Mammary epithelial cell (primary cell): ENCODE measurements at regions of chr2 and their contacts with region 1.

Region 1: GRCh38 chr2:201735486-201735885 is 37.0 kb upstream of the MPP4 start:
- DNase-seq: no peak
- H3K4me3 ChIP-seq: no peak overlapping the region
- H3K27ac ChIP-seq: no peak overlapping the region
- H3K4me1 ChIP-seq: peaks cover 10% of the 10 kb centered on the region
- H3K27me3 ChIP-seq: no peaks in the 10 kb centered on the region
- CTCF ChIP-seq: no peak

Region 2: DNA sequence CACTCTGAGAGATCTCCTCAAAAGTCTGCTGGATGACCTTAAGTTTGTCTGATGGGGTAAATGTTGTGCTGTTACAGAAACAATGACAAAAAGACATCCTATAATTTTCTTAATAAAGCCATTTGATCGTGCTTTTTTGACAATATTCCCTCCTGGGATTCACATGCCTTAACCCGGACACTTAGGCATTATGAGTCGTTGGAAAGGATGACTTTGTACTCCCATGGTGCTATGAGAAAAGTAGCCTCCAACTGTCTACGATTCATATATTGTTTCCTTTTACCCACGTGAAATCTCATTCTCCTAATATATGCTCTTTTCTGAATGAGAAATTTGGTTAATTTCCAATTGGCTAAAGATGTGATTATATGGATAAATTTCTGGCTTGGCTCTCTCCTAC is 30.9 kb before region 1 on chr2:
- CTCF ChIA-PET with region 1: no interaction called
- dilution Hi-C with region 1: loop called (anchors 5 kb)
- in situ Hi-C with region 1: no loop called
- intact Hi-C with region 1: no loop called
- DNase-seq: no peak
- H3K4me3 ChIP-seq: no peak overlapping the region
- H3K27ac ChIP-seq: no peak overlapping the region
- H3K4me1 ChIP-seq: peaks cover under 1% of the 10 kb centered on the region
- H3K27me3 ChIP-seq: no peaks in the 10 kb centered on the region
- CTCF ChIP-seq: no peak

Region 3: GRCh38 chr2:201807452-201807999 is 72.0 kb after region 1 on chr2:
- CTCF ChIA-PET with region 1: no interaction called
- dilution Hi-C with region 1: no loop called
- in situ Hi-C with region 1: no loop called
- intact Hi-C with region 1: no loop called
- DNase-seq: no peak
- H3K4me3 ChIP-seq: no peak overlapping the region
- H3K27ac ChIP-seq: no peak overlapping the region
- H3K4me1 ChIP-seq: no peaks in the 10 kb centered on the region
- H3K27me3 ChIP-seq: no peaks in the 10 kb centered on the region
- CTCF ChIP-seq: no peak